GM12878 (cell line): ENCODE measurements at regions of chr14 and their contacts with region 1.

Region 1: DNA sequence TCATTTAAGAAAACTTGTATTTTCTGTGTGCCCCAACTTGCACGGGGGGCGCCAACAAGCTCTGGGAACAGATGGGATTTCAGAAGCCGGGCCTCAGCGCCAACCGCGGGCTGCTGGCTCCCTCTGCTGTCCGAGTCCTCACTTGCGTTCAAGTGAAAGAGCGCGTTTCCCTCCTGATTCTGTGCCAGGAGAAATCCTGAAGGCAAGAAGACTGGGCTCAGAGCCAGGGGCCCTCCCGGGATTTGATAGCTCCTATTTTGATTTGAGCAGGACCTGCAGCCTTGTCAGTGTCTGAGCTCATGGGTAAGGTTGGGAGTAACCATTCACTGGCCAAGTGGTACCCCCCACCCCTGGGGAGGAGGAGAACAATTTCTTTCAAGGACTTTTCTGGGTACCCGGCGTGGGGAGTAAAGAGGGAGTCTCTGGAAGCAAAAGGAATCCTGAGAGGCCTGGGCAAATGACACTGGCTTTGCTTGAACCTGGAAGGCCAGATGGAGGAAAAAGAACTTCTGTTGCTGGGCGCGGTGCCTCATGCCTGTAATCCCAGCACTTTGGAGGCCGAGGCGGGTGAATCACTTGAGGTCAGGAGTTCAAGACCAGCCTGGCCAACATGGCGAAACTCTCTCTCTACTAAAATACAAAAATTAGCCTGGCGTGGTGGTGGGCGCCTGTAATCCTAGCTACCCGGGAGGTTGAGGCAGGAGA is 179.0 kb upstream of the RGS6 start:
- DNase-seq: peak; percentile 27
- ATAC-seq: peak; percentile 85
- H3K4me3 ChIP-seq: no peak overlapping the region
- H3K27ac ChIP-seq: no peak overlapping the region
- H3K4me1 ChIP-seq: no peaks in the 10 kb centered on the region
- H3K27me3 ChIP-seq: no peaks in the 10 kb centered on the region
- CTCF ChIP-seq: peak; percentile 88 to 94 (median 91)
- EP300 ChIP-seq: no peak
- POLR2A ChIP-seq: no peak
- RAD21 ChIP-seq: peak; percentile 99

Region 2: DNA sequence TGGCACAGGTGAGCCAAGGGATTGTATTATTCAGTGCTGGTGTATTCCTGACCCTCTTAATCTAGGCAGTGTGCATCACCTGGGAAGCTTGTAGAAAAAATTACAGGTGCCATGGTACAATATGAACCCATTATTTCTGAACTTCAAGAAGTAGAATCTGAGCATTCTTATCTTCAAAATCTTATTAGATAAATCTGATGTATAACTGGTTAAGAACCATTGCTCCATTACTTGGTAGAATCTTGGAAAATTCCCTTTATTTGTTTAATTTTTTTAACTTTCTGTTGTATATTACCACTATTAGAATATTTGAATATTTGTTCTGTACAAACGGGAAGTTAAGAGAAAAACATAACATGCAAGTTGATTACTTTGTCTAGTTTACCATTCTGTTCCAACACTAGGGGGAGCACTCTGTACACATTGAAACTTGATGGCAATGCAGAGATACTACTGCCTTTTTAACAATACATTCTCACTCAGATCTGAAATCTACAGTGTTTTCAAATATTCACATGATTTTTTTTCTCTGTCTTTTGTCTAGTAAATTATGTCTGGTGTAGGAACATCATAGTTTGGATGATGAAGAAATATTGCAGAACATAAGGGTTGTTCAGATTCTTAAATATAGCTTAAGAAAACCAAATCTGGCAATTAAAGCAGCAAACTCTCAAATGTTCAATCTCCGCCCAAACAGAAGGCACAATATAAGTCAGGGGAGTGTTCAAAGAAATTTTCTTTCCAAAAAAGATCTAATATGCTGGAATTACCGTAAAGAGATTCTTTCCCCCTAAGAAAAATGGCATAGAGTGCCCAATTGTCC is 649.4 kb before region 1 on chr14:
- CTCF ChIA-PET with region 1: interaction called, 35 read pairs
- POLR2A ChIA-PET with region 1: no interaction called
- RAD21 ChIA-PET with region 1: interaction called, 29 read pairs
- SMC1A ChIA-PET with region 1: interaction called, 10 read pairs
- in situ Hi-C with region 1: no loop called
- intact Hi-C with region 1: loop called (anchors 1 kb)
- DNase-seq: peak; percentile 13
- ATAC-seq: peak; percentile 88
- H3K4me3 ChIP-seq: no peak overlapping the region
- H3K27ac ChIP-seq: no peak overlapping the region
- H3K4me1 ChIP-seq: no peaks in the 10 kb centered on the region
- H3K27me3 ChIP-seq: no peaks in the 10 kb centered on the region
- CTCF ChIP-seq: peak; percentile 65 to 82 (median 75)
- EP300 ChIP-seq: no peak
- POLR2A ChIP-seq: no peak
- RAD21 ChIP-seq: peak; percentile 69

Region 3: GRCh38 chr14:71130491-71131179 is 622.6 kb before region 1 on chr14:
- CTCF ChIA-PET with region 1: interaction called, 202 read pairs
- POLR2A ChIA-PET with region 1: no interaction called
- RAD21 ChIA-PET with region 1: interaction called, 56 read pairs
- SMC1A ChIA-PET with region 1: interaction called, 230 read pairs
- in situ Hi-C with region 1: loop called (anchors 5 kb)
- intact Hi-C with region 1: no loop called
- DNase-seq: peak; percentile 20
- ATAC-seq: peak; percentile 97
- H3K4me3 ChIP-seq: no peak overlapping the region
- H3K27ac ChIP-seq: no peak overlapping the region
- H3K4me1 ChIP-seq: no peaks in the 10 kb centered on the region
- H3K27me3 ChIP-seq: no peaks in the 10 kb centered on the region
- CTCF ChIP-seq: no peak
- EP300 ChIP-seq: no peak
- POLR2A ChIP-seq: no peak
- RAD21 ChIP-seq: no peak

Region 4: GRCh38 chr14:71138448-71139293 is 614.6 kb before region 1 on chr14:
- CTCF ChIA-PET with region 1: interaction called, 202 read pairs
- POLR2A ChIA-PET with region 1: interaction called, 9 read pairs
- RAD21 ChIA-PET with region 1: interaction called, 56 read pairs
- SMC1A ChIA-PET with region 1: interaction called, 230 read pairs
- in situ Hi-C with region 1: loop called (anchors 5 kb)
- intact Hi-C with region 1: loop called (anchors 1 kb)
- DNase-seq: peak; percentile 9
- ATAC-seq: peak; percentile 85
- H3K4me3 ChIP-seq: no peak overlapping the region
- H3K27ac ChIP-seq: no peak overlapping the region
- H3K4me1 ChIP-seq: peaks cover 17% of the 10 kb centered on the region
- H3K27me3 ChIP-seq: no peaks in the 10 kb centered on the region
- CTCF ChIP-seq: peak; percentile 87 to 90 (median 88)
- EP300 ChIP-seq: no peak
- POLR2A ChIP-seq: no peak
- RAD21 ChIP-seq: peak; percentile 99

Region 5: GRCh38 chr14:71166180-71166790 is 587.0 kb before region 1 on chr14:
- CTCF ChIA-PET with region 1: interaction called, 13 read pairs
- POLR2A ChIA-PET with region 1: no interaction called
- RAD21 ChIA-PET with region 1: interaction called, 3 read pairs
- SMC1A ChIA-PET with region 1: interaction called, 3 read pairs
- in situ Hi-C with region 1: no loop called
- intact Hi-C with region 1: no loop called
- DNase-seq: no peak
- ATAC-seq: peak; percentile 22; the same call in 2 of the 3 replicates
- H3K4me3 ChIP-seq: no peak overlapping the region
- H3K27ac ChIP-seq: no peak overlapping the region
- H3K4me1 ChIP-seq: no peaks in the 10 kb centered on the region
- H3K27me3 ChIP-seq: no peaks in the 10 kb centered on the region
- CTCF ChIP-seq: peak; percentile 40 to 55 (median 43); a peak in 5 of 6 replicates
- EP300 ChIP-seq: no peak
- POLR2A ChIP-seq: no peak
- RAD21 ChIP-seq: peak; percentile 67

Region 6: DNA sequence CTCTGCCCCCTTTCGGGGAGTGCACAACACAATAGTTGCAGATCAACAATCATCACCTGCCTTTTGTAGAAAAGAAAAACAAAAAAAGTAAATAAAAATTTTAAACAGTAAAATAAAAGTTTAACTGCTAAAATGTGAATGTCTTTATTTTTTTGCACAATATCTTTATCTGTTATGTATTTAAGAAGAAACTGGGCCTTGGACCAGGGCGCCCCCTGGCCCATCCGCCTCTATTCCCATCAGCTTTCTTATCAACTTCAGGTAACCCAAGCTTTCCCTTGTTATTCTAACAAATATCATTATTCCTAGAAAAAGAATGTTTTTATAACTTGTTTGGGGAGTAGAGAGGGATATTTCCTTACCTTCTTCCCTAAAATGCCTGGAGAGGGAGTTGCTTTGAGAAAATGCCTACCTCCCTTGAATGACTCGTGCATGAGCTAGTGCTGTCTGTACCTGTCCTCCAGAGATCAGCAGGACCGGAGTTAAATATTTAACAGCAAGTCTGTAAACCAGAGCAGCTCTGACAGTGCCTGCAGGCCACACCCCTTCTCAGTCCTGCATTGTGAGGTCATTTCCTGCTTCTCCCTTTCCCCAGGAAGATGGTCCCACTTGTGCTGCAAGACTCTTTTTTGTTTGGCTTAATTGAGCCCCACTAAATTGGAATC is 13.9 kb before region 1 on chr14:
- CTCF ChIA-PET with region 1: interaction called, 11 read pairs
- POLR2A ChIA-PET with region 1: no interaction called
- RAD21 ChIA-PET with region 1: interaction called, 5 read pairs
- SMC1A ChIA-PET with region 1: interaction called, 5 read pairs
- in situ Hi-C with region 1: no loop called
- intact Hi-C with region 1: no loop called
- DNase-seq: no peak
- ATAC-seq: peak; percentile 39; the same call in 1 of the 3 replicates
- H3K4me3 ChIP-seq: no peak overlapping the region
- H3K27ac ChIP-seq: no peak overlapping the region
- H3K4me1 ChIP-seq: no peaks in the 10 kb centered on the region
- H3K27me3 ChIP-seq: no peaks in the 10 kb centered on the region
- CTCF ChIP-seq: peak in 1 of 3 experiments; percentile 11; a peak in 1 of 6 replicates
- EP300 ChIP-seq: no peak
- POLR2A ChIP-seq: no peak
- RAD21 ChIP-seq: no peak

Region 7: GRCh38 chr14:71764701-71765382 is 11.6 kb after region 1 on chr14:
- CTCF ChIA-PET with region 1: interaction called, 12 read pairs
- POLR2A ChIA-PET with region 1: interaction called, 4 read pairs
- RAD21 ChIA-PET with region 1: interaction called, 9 read pairs
- SMC1A ChIA-PET with region 1: interaction called, 8 read pairs
- in situ Hi-C with region 1: no loop called
- intact Hi-C with region 1: no loop called
- DNase-seq: no peak
- ATAC-seq: no peak
- H3K4me3 ChIP-seq: no peak overlapping the region
- H3K27ac ChIP-seq: no peak overlapping the region
- H3K4me1 ChIP-seq: no peaks in the 10 kb centered on the region
- H3K27me3 ChIP-seq: no peaks in the 10 kb centered on the region; a peak in 1 of 4 replicates
- CTCF ChIP-seq: no peak
- EP300 ChIP-seq: no peak
- POLR2A ChIP-seq: no peak
- RAD21 ChIP-seq: no peak